ENCODE measurements at regions of chr17 and their contacts with region 1.

Region 1: GRCh38 chr17:19317359-19318095 is 45.0 kb downstream of the B9D1 start:
- DNase-seq: peak; percentile 86 to 98 (median 97)
- H3K4me3 ChIP-seq: peak overlapping the region in 21 of 59 donors; percentile 0 to 33 (median 17)
- H3K27ac ChIP-seq: peak overlapping the region; percentile 81 to 100 (median 96)
- H3K27me3 ChIP-seq: no peaks in the 10 kb centered on the region
- CTCF ChIP-seq: peak in 54 of 56 donors; percentile 13 to 77 (median 54)

Region 2: GRCh38 chr17:19248928-19249574 is 68.5 kb before region 1 on chr17:
- intact Hi-C with region 1: no loop called
- DNase-seq: peak in 7 of 10 donors; percentile 44 to 77 (median 60)
- H3K4me3 ChIP-seq: peak overlapping the region in 2 of 59 donors; percentile 13
- H3K27ac ChIP-seq: peak overlapping the region; percentile 75 to 98 (median 93)
- H3K27me3 ChIP-seq: no peaks in the 10 kb centered on the region
- CTCF ChIP-seq: peak in 2 of 56 donors; percentile 11 to 13

Region 3: GRCh38 chr17:19306160-19307111 is 11.1 kb before region 1 on chr17:
- intact Hi-C with region 1: loop called in 1 of 2 experiments (anchors 1 kb)
- DNase-seq: peak in 9 of 10 donors; percentile 79 to 97 (median 89)
- H3K4me3 ChIP-seq: peak overlapping the region in 42 of 59 donors; percentile 9 to 65 (median 37)
- H3K27ac ChIP-seq: peak overlapping the region; percentile 62 to 100 (median 97)
- H3K27me3 ChIP-seq: no peaks in the 10 kb centered on the region
- CTCF ChIP-seq: peak in 8 of 56 donors; percentile 7 to 36 (median 20)

Region 4: GRCh38 chr17:19336938-19337711 is 19.6 kb after region 1 on chr17:
- intact Hi-C with region 1: loop called in 1 of 2 experiments (anchors 2 kb)
- DNase-seq: peak; percentile 51 to 80 (median 72)
- H3K4me3 ChIP-seq: peak overlapping the region in 1 of 59 donors; percentile 12
- H3K27ac ChIP-seq: peak overlapping the region in 58 of 59 donors; percentile 3 to 91 (median 79)
- H3K27me3 ChIP-seq: no peaks in the 10 kb centered on the region
- CTCF ChIP-seq: peak in 37 of 56 donors; percentile 11 to 71 (median 33)

Measured in dorsolateral prefrontal cortex (tissue), 120 donors.